ENCODE measurements at regions of chr7 and their contacts with region 1.

Region 1: DNA sequence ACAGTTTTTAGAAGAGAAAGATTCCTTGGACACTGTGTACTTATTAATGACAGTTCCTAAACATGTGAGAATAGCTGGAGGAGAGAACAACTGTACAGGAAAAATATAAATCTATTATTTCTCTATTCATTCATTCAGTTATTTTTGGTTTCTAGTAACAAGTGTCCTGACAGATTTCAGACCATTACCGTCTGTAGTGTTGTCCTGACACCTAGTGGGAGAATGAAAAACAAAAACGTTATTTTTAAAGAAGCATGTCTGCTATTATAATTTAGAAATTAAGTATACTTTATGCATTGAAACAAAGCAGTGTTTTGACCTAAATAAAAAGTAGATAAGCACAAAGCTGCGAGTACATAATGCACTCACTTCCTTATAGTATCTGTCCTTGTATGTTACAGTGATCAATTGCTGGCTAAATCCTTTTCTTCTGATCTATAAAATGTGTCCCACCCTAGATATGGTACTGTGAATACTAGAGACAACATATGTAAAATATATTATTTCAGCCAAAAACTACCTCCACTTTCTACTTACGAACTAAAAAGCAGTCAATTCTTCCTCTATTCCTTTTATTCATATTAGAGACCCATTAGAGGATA is 575.6 kb downstream of the ARL4A start:
- DNase-seq: peak in 1 of 2 donors; percentile 74
- H3K4me3 ChIP-seq: no peak overlapping the region
- H3K27ac ChIP-seq: no peak overlapping the region
- H3K4me1 ChIP-seq: no peaks in the 10 kb centered on the region
- H3K27me3 ChIP-seq: no peaks in the 10 kb centered on the region
- CTCF ChIP-seq: peak in 4 of 7 experiments; percentile 34 to 59 (median 46)
- EP300 ChIP-seq: no peak
- POLR2A ChIP-seq: no peak

Region 2: DNA sequence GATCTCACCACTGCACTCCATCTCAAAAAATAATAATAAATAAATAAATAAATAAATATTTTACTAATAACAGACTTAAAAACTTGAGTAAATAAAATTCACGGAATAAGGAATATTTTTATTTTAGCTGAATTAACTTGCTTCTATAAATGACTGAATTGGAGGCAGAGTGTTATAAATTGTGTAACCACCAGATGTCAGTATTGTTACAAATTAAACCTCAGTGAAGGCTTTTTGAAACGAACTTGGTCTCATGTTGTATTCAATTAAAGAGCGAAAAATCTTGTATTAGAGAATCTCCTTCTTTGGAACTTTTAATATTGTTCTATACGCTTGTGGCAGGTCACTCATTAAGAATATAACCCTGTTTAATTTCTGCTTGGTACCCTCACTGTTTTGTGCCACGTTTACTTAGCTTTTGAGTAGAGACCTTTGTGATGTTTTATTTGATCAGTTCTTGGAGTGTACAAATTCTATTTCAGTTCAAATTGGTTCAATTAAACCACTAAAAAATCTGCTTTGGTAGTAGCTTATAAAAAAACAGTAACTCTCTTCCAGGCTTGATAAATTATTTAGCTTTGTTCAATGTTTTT is 738.1 kb before region 1 on chr7:
- intact Hi-C with region 1: loop called (anchors 5 kb)
- DNase-seq: peak in 1 of 2 donors; percentile 72
- H3K4me3 ChIP-seq: no peak overlapping the region
- H3K27ac ChIP-seq: no peak overlapping the region
- H3K4me1 ChIP-seq: peaks cover 0 to 5% (median 0%) of the 10 kb centered on the region in 4 donors
- H3K27me3 ChIP-seq: peaks cover 0 to 5% (median 0%) of the 10 kb centered on the region in 3 donors
- CTCF ChIP-seq: peak in 5 of 7 experiments; percentile 26 to 70 (median 60)
- EP300 ChIP-seq: no peak
- POLR2A ChIP-seq: no peak

Region 3: GRCh38 chr7:13099154-13099795 is 163.8 kb before region 1 on chr7:
- intact Hi-C with region 1: no loop called
- DNase-seq: no peak
- H3K4me3 ChIP-seq: no peak overlapping the region
- H3K27ac ChIP-seq: no peak overlapping the region
- H3K4me1 ChIP-seq: no peaks in the 10 kb centered on the region
- H3K27me3 ChIP-seq: no peaks in the 10 kb centered on the region
- CTCF ChIP-seq: no peak
- EP300 ChIP-seq: no peak
- POLR2A ChIP-seq: no peak

Region 4: GRCh38 chr7:13524076-13524475 is 261.0 kb after region 1 on chr7:
- intact Hi-C with region 1: no loop called
- DNase-seq: no peak
- H3K4me3 ChIP-seq: no peak overlapping the region
- H3K27ac ChIP-seq: no peak overlapping the region
- H3K4me1 ChIP-seq: no peaks in the 10 kb centered on the region
- H3K27me3 ChIP-seq: no peaks in the 10 kb centered on the region
- CTCF ChIP-seq: no peak
- EP300 ChIP-seq: no peak
- POLR2A ChIP-seq: no peak

Measured in stomach (tissue), 19 donors.